Caco-2 (cell line): ENCODE measurements at regions of chr17 and their contacts with region 1.

Region 1: DNA sequence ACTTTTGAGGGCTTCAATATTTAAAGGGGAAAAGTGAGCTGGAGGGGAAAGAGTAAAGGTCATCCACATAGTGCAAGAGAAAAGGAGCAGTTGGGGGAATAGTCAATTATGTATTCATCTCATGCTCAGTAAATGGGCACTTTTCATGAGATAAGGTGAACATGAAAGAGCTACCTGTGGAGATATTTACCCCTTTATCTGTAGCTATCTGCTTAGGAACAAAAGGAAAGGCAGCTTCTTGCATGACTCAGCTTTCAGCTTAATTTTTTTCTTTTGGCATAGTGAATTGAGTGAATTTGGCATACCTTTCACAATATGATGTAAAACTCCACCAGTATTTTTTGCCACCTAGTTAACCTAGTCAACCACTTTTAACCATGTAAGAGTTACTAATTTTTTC is 26.4 kb downstream of the CPD start:
- DNase-seq: peak in 1 of 2 experiments; percentile 63
- H3K4me3 ChIP-seq: no peak overlapping the region
- H3K4me3 Mint-ChIP-seq: peak overlapping the region; percentile 62
- H3K27ac Mint-ChIP-seq: peak overlapping the region; percentile 84
- H3K4me1 ChIP-seq: peaks cover 36% of the 10 kb centered on the region
- H3K4me1 Mint-ChIP-seq: peaks cover 49% of the 10 kb centered on the region
- H3K27me3 ChIP-seq: no peaks in the 10 kb centered on the region
- H3K27me3 Mint-ChIP-seq: no peaks in the 10 kb centered on the region
- CTCF ChIP-seq: no peak

Region 2: GRCh38 chr17:30291543-30292285 is 113.4 kb before region 1 on chr17 and contains the start of gene BLMH:
- CTCF ChIA-PET with region 1: no interaction called
- POLR2A ChIA-PET with region 1: no interaction called
- intact Hi-C with region 1: no loop called
- DNase-seq: peak; percentile 72 to 84
- H3K4me3 ChIP-seq: peak within 1 kb of the TSS; percentile 80
- H3K4me3 Mint-ChIP-seq: peak within 1 kb of the TSS; percentile 76
- H3K27ac Mint-ChIP-seq: peak within 1 kb of the TSS; percentile 69
- H3K4me1 ChIP-seq: peaks cover 11% of the 10 kb centered on the region
- H3K4me1 Mint-ChIP-seq: no peaks in the 10 kb centered on the region
- H3K27me3 ChIP-seq: no peaks in the 10 kb centered on the region
- H3K27me3 Mint-ChIP-seq: no peaks in the 10 kb centered on the region
- CTCF ChIP-seq: no peak
- total RNA-seq, gene BLMH: 56.1 and 57.4 TPM in 2 replicates

Region 3: DNA sequence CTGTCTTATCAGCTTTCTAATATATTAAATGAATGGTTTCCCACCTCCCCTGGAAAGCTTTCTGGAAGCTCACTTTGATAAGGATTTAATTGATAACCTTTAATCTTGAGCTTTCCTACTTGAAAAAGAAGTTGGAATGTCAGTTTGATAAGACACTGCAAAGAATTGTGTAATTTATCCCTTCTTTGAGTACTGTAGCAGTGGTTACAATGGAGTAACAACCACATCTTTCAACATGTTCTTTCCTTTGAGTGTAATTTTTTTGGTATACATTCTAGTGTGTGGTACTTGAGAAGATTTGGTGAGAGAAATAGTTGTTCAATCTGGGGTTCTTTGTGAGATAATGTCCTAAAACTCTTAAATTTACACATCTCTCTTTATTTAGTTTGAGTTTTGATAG is 17.0 kb after region 1 on chr17:
- CTCF ChIA-PET with region 1: no interaction called
- POLR2A ChIA-PET with region 1: no interaction called
- intact Hi-C with region 1: loop called (anchors 2 kb)
- DNase-seq: no peak
- H3K4me3 ChIP-seq: no peak overlapping the region
- H3K4me3 Mint-ChIP-seq: no peak overlapping the region
- H3K27ac Mint-ChIP-seq: peak overlapping the region; percentile 25
- H3K4me1 ChIP-seq: peaks cover 19% of the 10 kb centered on the region
- H3K4me1 Mint-ChIP-seq: peaks cover 19% of the 10 kb centered on the region
- H3K27me3 ChIP-seq: no peaks in the 10 kb centered on the region
- H3K27me3 Mint-ChIP-seq: no peaks in the 10 kb centered on the region
- CTCF ChIP-seq: no peak